AG04449 (cell line): ENCODE measurements at regions of chr1 and their contacts with region 1.

Region 1: DNA sequence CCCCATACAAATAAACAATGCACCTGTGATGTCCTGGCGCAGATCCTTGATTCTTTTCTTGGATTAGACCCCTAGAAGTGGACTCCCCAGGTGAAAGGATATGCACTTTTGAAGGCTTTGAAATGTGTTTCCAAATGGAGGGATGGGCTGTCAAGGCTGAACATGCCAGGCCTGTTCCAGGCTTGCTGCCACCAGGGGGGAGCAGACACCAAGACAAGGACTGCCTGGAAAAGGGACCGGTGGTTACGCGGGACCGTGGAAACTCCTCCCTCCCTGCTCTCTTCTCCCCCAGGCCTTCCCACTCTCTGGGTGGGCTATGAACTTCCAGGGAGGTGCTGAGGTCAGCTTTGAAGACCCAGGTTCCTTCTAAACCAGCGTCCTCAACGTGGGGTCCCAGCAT is 12.7 kb downstream of the C1QB start:
- DNase-seq: no peak
- H3K4me3 ChIP-seq: no peak overlapping the region
- CTCF ChIP-seq: peak; percentile 74

Region 2: GRCh38 chr1:22963044-22963677 is 297.4 kb after region 1 on chr1:
- CTCF ChIA-PET with region 1: interaction called, 96 read pairs
- POLR2A ChIA-PET with region 1: no interaction called
- DNase-seq: no peak
- H3K4me3 ChIP-seq: no peak overlapping the region
- CTCF ChIP-seq: no peak

Region 3: DNA sequence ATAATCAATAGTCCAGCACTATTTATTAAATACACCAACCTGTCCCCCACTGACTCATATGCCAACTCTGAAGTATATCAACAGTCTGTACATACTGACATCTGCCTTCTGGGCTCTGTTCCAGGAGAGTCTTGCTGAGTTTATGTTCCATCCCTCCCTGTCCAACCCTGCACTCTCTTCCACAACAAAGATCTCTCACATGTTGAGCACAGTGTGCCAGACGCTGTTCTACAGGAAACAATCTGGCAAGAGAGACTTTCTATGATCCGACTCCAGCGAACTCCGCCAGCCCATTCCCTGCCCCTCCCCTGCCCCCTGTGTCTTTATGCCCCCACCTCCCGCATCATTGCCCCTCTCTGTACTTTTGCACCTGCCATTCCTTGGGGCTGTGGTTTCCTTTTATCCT is 303.6 kb after region 1 on chr1:
- CTCF ChIA-PET with region 1: interaction called, 96 read pairs
- POLR2A ChIA-PET with region 1: no interaction called
- DNase-seq: peak; percentile 23
- H3K4me3 ChIP-seq: no peak overlapping the region
- CTCF ChIP-seq: no peak